Activated CD4-positive, alpha-beta T cell treated with anti-CD3 and anti-CD28 coated beads for 36 hours (primary cell): ENCODE measurements at regions of chr10 and their contacts with region 1.

Region 1: GRCh38 chr10:3353235-3353634 is 180.7 kb upstream of the PITRM1 start:
- DNase-seq: no peak
- ATAC-seq: no peak
- H3K4me3 Mint-ChIP-seq: no peak overlapping the region
- H3K27ac Mint-ChIP-seq: no peak overlapping the region
- H3K4me1 Mint-ChIP-seq: peaks cover 3% of the 10 kb centered on the region
- H3K27me3 Mint-ChIP-seq: peaks cover 13% of the 10 kb centered on the region

Region 2: GRCh38 chr10:4384245-4384644 is 1031.0 kb after region 1 on chr10:
- CTCF ChIA-PET with region 1: no interaction called
- POLR2A ChIA-PET with region 1: no interaction called
- intact Hi-C with region 1: loop called in 1 of 2 experiments (anchors 10 kb)
- DNase-seq: no peak
- ATAC-seq: no peak
- H3K4me3 Mint-ChIP-seq: no peak overlapping the region
- H3K27ac Mint-ChIP-seq: no peak overlapping the region
- H3K4me1 Mint-ChIP-seq: no peaks in the 10 kb centered on the region
- H3K27me3 Mint-ChIP-seq: peaks cover 3% of the 10 kb centered on the region